ENCODE measurements at regions of chr1 and their contacts with region 1.

Region 1: DNA sequence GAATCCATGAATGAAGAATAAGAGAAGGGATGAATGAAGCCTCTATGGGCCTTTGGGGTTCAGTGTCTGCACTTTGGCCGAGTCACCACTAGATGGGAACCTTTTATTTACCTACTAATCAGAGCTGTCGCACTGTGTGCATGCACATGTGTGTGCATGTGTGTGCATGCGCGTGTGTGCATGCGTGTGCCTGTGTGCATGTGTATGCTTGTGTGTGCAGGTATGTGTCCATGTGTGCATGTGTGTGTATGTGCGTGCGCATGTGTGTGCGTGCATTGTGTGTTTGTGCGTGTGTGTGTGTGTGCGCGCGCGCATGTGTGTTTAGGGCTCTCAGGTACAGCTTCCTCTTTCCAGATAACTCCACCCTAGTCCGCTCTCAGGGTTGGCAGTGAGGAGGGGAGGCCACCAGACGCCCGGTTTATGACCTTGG is 20.4 kb upstream of the UBXN10 start:
- DNase-seq: no peak
- ATAC-seq: no peak

Region 2: DNA sequence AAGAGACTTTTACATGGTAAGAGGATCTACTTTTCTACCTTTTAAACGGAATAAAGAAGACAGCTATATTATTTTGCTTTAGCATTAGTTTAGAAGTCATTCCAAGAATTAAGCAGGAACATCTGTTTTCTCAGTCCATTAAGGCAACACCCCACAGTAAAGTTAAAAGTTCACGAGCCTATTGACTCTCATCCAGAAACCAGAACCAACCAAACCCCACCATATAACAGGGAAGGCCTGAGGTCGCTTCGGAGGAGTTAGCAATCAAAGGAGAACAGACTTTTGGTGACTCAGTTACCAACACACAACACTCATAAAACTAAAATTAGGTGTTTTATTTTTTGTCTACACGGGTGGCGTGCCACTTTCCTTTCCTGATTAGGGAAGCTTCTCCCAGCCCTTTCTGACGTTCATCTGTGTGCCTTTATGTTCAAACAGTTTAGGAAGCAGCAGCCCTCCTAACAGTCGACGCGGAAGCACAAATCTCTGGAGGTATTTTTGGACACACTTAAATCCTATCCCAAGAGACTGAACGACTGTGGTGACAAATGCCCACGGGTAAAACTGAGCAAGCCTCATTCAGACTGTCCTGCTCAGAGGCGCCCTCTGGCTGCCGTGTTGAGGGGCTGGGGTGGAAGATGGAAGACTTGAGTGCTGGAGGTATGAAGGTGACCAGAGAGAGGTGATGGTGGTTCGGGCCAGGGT is 29.4 kb after region 1 on chr1:
- intact Hi-C with region 1: loop called (anchors 2 kb)
- DNase-seq: peak; percentile 80
- ATAC-seq: peak; percentile 83